ENCODE measurements at regions of chr1 and their contacts with region 1.

Region 1: GRCh38 chr1:109984456-109985275 is at the start of gene AHCYL1:
- DNase-seq: peak; percentile 98 to 99 (median 99)
- H3K4me3 ChIP-seq: peak within 1 kb of the TSS; percentile 58 to 75
- H3K4me3 Mint-ChIP-seq: peak within 1 kb of the TSS; percentile 97 to 100 (median 99)
- H3K27ac ChIP-seq: peak within 1 kb of the TSS; percentile 82
- H3K27ac Mint-ChIP-seq: peak within 1 kb of the TSS; percentile 96 to 99 (median 99)
- H3K4me1 ChIP-seq: peaks cover 31% of the 10 kb centered on the region
- H3K4me1 Mint-ChIP-seq: peaks cover 25 to 48% (median 35%) of the 10 kb centered on the region in 4 donors
- H3K27me3 ChIP-seq: no peaks in the 10 kb centered on the region
- H3K27me3 Mint-ChIP-seq: no peaks in the 10 kb centered on the region
- total RNA-seq, gene AHCYL1: 44.2 to 45.1 TPM

Region 2: DNA sequence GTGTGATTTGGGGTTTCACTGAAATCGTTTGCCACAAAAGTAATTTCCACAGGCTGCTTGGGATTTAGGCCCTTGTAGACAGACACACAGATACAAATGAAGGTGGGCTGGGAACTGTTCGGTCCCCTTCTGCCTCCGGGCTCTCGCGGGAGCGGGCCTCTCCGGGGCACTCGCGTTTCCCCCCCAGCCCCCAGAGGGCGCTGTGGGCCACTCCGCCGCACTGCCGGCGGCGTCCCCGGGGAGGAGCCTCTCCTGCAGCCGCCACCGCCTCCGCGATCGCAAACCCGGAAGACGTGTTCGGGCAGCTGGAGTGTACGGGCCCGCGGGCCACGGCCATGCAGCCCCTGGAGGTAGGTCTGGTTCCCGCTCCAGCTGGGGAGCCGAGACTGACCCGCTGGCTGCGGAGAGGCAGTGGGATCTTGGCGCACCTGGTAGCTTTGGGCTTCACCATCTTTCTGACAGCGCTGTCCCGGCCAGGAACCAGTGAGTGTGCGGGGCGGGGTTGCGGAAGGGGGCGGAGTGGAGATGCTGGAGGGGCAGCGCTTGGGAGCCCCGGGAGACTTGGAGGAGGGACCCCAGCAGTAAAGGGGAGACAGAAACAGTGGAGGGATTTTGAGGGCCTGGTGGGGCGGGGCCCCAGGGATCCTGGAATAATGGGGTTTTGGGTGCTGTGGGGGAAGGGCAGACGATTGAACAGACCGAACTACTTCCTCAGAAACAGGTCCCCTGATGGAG is 490.7 kb before region 1 on chr1 and contains the start of gene CYB561D1:
- CTCF ChIA-PET with region 1: interaction called, 3 read pairs
- POLR2A ChIA-PET with region 1: no interaction called
- intact Hi-C with region 1: loop called (anchors 5 kb)
- DNase-seq: peak; percentile 87 to 95 (median 89)
- H3K4me3 ChIP-seq: peak within 1 kb of the TSS; percentile 91 to 97
- H3K4me3 Mint-ChIP-seq: peak within 1 kb of the TSS; percentile 94 to 97 (median 96)
- H3K27ac ChIP-seq: peak within 1 kb of the TSS; percentile 53
- H3K27ac Mint-ChIP-seq: peak within 1 kb of the TSS; percentile 86 to 95 (median 93)
- H3K4me1 ChIP-seq: peaks cover 57% of the 10 kb centered on the region
- H3K4me1 Mint-ChIP-seq: peaks cover 30 to 60% (median 46%) of the 10 kb centered on the region in 4 donors
- H3K27me3 ChIP-seq: no peaks in the 10 kb centered on the region
- H3K27me3 Mint-ChIP-seq: no peaks in the 10 kb centered on the region
- total RNA-seq, gene CYB561D1: 40.7 to 41.6 TPM

Region 3: GRCh38 chr1:109655601-109656519 is 328.8 kb before region 1 on chr1 and contains the start of gene GSTM4:
- CTCF ChIA-PET with region 1: interaction called, 14 read pairs
- POLR2A ChIA-PET with region 1: interaction called, 4 read pairs
- intact Hi-C with region 1: loop called (anchors 5 kb)
- DNase-seq: peak; percentile 19 to 60 (median 42)
- H3K4me3 ChIP-seq: peak within 1 kb of the TSS; percentile 49 to 70
- H3K4me3 Mint-ChIP-seq: peak within 1 kb of the TSS; percentile 89 to 98 (median 94)
- H3K27ac ChIP-seq: peak within 1 kb of the TSS; percentile 52
- H3K27ac Mint-ChIP-seq: peak within 1 kb of the TSS; percentile 72 to 95 (median 89)
- H3K4me1 ChIP-seq: peaks cover 12% of the 10 kb centered on the region
- H3K4me1 Mint-ChIP-seq: peaks cover 7 to 25% (median 15%) of the 10 kb centered on the region in 4 donors
- H3K27me3 ChIP-seq: peaks cover 4% of the 10 kb centered on the region
- H3K27me3 Mint-ChIP-seq: peaks cover 1 to 7% of the 10 kb centered on the region in 2 donors
- total RNA-seq, gene GSTM4: 12.6 to 14.2 TPM

Region 4: GRCh38 chr1:109773146-109773899 is 211.3 kb before region 1 on chr1:
- CTCF ChIA-PET with region 1: interaction called, 864 read pairs
- POLR2A ChIA-PET with region 1: interaction called, 86 read pairs
- intact Hi-C with region 1: loop called (anchors 1 kb)
- DNase-seq: peak; percentile 68 to 76 (median 74)
- H3K4me3 ChIP-seq: no peak overlapping the region
- H3K4me3 Mint-ChIP-seq: no peak overlapping the region
- H3K27ac ChIP-seq: no peak overlapping the region
- H3K27ac Mint-ChIP-seq: peak overlapping the region in 5 of 7 donors; percentile 29 to 56 (median 42)
- H3K4me1 ChIP-seq: peaks cover 6% of the 10 kb centered on the region
- H3K4me1 Mint-ChIP-seq: peaks cover 9 to 21% (median 10%) of the 10 kb centered on the region in 4 donors
- H3K27me3 ChIP-seq: no peaks in the 10 kb centered on the region
- H3K27me3 Mint-ChIP-seq: peaks cover 0 to 3% of the 10 kb centered on the region in 2 donors

Region 5: DNA sequence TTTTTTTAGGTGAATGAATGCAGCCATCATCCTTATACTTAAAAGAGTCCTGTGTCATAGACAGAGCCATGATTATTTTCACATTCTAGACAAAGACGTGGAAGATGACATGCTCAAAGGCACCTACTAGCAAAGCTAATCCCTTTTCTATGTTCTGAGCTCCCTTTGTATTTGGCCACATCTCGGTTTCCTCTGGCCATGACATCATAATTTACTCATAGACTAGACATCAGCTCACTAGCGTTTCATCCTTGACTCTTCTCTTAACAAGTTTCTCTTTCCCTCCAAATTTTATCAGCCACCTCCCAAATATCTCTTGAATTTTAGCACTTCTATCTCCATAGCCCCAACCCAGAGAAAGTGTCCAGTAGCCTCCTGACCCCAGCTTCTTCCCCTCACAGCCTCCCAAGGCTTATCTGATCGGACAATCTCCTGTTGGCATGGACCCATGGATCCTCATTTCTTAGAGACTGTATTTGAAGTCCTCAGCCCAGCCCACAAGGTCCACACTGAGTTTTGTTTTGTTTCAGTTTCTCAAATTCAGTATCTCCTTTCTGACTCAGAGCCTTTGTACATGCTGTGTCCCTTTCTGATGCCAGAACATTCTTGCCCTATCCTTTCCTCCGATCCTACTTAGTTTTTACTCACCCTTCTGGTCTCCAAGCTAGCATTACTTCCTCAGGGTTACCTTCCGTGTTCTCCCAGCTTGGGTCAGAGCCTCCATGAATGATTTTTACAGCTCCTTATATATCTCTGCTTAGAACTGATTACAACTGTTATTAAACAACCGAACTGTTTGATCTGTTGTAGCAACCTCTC is 188.0 kb before region 1 on chr1:
- CTCF ChIA-PET with region 1: interaction called, 864 read pairs
- POLR2A ChIA-PET with region 1: interaction called, 34 read pairs
- intact Hi-C with region 1: no loop called
- DNase-seq: no peak
- H3K4me3 ChIP-seq: no peak overlapping the region
- H3K4me3 Mint-ChIP-seq: peak overlapping the region; percentile 2 to 60 (median 30)
- H3K27ac ChIP-seq: no peak overlapping the region
- H3K27ac Mint-ChIP-seq: peak overlapping the region; percentile 49 to 80 (median 65)
- H3K4me1 ChIP-seq: peaks cover 85% of the 10 kb centered on the region
- H3K4me1 Mint-ChIP-seq: peaks cover 47 to 83% (median 66%) of the 10 kb centered on the region in 4 donors
- H3K27me3 ChIP-seq: no peaks in the 10 kb centered on the region
- H3K27me3 Mint-ChIP-seq: no peaks in the 10 kb centered on the region

Region 6: DNA sequence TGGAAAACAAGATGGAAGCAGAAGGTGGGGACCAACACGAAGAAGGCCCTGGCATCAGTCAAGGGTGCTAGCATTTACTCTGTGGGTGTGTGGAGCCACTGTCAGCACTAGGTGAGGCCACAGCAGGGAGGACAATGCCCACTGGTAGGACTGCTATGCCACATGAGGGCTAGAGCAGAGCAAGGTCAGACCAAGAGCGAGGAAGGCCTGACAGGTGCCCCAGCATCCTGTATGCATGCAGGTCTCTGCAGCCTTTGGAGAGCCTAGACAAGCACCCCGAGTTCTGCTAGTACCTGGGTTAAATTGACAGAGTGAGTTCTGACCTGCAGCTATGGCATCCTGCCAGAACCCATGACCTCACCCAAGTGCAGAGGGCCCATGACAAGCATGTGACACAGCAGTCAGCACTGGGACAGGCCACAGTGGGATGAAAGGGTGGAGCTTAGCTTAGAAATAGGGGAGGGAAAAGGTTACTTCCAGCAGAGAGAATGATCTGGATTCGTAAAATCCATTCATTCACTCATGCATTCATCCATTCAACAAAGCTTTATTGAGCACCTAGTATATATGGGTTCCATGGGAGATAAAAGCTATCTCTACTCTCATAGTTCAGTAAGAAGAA is 83.0 kb before region 1 on chr1:
- CTCF ChIA-PET with region 1: interaction called, 14 read pairs
- POLR2A ChIA-PET with region 1: interaction called, 8 read pairs
- intact Hi-C with region 1: loop called (anchors 2 kb)
- DNase-seq: no peak
- H3K4me3 ChIP-seq: no peak overlapping the region
- H3K4me3 Mint-ChIP-seq: no peak overlapping the region
- H3K27ac ChIP-seq: no peak overlapping the region
- H3K27ac Mint-ChIP-seq: peak overlapping the region in 1 of 7 donors; percentile 17
- H3K4me1 ChIP-seq: peaks cover 14% of the 10 kb centered on the region
- H3K4me1 Mint-ChIP-seq: peaks cover 12 to 19% (median 14%) of the 10 kb centered on the region in 4 donors
- H3K27me3 ChIP-seq: no peaks in the 10 kb centered on the region
- H3K27me3 Mint-ChIP-seq: no peaks in the 10 kb centered on the region

Region 7: GRCh38 chr1:109996476-109996875 is 11.8 kb after region 1 on chr1:
- CTCF ChIA-PET with region 1: interaction called, 12 read pairs
- POLR2A ChIA-PET with region 1: interaction called, 7 read pairs
- intact Hi-C with region 1: no loop called
- DNase-seq: no peak
- H3K4me3 ChIP-seq: no peak overlapping the region
- H3K4me3 Mint-ChIP-seq: no peak overlapping the region
- H3K27ac ChIP-seq: no peak overlapping the region
- H3K27ac Mint-ChIP-seq: no peak overlapping the region
- H3K4me1 ChIP-seq: no peaks in the 10 kb centered on the region
- H3K4me1 Mint-ChIP-seq: peaks cover 6 to 9% (median 9%) of the 10 kb centered on the region in 4 donors
- H3K27me3 ChIP-seq: no peaks in the 10 kb centered on the region
- H3K27me3 Mint-ChIP-seq: no peaks in the 10 kb centered on the region

Region 8: DNA sequence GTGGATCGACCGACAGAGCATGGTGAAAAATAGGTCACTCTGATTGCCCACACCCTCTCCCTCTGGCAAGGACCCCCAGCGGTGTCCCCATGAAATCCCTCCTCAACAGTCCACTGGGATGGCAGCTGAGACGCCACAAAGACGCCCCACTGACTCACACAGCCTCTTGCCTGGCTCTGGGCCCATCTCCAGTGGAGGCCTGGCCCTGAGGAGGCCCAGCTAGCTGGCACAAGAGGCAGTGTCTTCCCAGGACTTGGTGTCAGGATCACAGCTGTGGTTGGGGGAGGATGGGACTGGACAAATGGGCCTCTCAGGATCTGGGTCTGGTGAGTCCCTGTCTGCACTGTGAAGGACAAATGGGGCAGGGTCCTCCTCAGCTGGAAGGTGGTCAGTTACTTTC is 81.2 kb after region 1 on chr1:
- CTCF ChIA-PET with region 1: no interaction called
- POLR2A ChIA-PET with region 1: no interaction called
- intact Hi-C with region 1: no loop called
- DNase-seq: no peak
- H3K4me3 ChIP-seq: no peak overlapping the region
- H3K4me3 Mint-ChIP-seq: no peak overlapping the region
- H3K27ac ChIP-seq: no peak overlapping the region
- H3K27ac Mint-ChIP-seq: no peak overlapping the region
- H3K4me1 ChIP-seq: peaks cover 28% of the 10 kb centered on the region
- H3K4me1 Mint-ChIP-seq: peaks cover 8 to 25% (median 16%) of the 10 kb centered on the region in 4 donors
- H3K27me3 ChIP-seq: peaks cover 17% of the 10 kb centered on the region
- H3K27me3 Mint-ChIP-seq: peaks cover 22 to 25% of the 10 kb centered on the region in 2 donors

Region 9: GRCh38 chr1:110196917-110197765 is 212.5 kb after region 1 on chr1:
- CTCF ChIA-PET with region 1: no interaction called
- POLR2A ChIA-PET with region 1: no interaction called
- intact Hi-C with region 1: no loop called
- DNase-seq: peak; percentile 53 to 65 (median 63)
- H3K4me3 ChIP-seq: no peak overlapping the region
- H3K4me3 Mint-ChIP-seq: no peak overlapping the region
- H3K27ac ChIP-seq: no peak overlapping the region
- H3K27ac Mint-ChIP-seq: peak overlapping the region in 2 of 7 donors; percentile 56 to 80
- H3K4me1 ChIP-seq: no peaks in the 10 kb centered on the region
- H3K4me1 Mint-ChIP-seq: peaks cover 0 to 3% (median under 1%) of the 10 kb centered on the region in 4 donors
- H3K27me3 ChIP-seq: no peaks in the 10 kb centered on the region
- H3K27me3 Mint-ChIP-seq: no peaks in the 10 kb centered on the region

Measured in CD4-positive, alpha-beta memory T cell (primary cell).